GM12878 (cell line): ENCODE measurements at regions of chr11 and their contacts with region 1.

Region 1: GRCh38 chr11:128630367-128631230 is 43.2 kb upstream of the ETS1 start:
- DNase-seq: peak; percentile 89
- ATAC-seq: peak; percentile 87
- H3K4me3 ChIP-seq: peak overlapping the region; percentile 15; the same call in 1 of the 2 replicates
- H3K27ac ChIP-seq: peak overlapping the region; percentile 64
- H3K4me1 ChIP-seq: peaks cover 51% of the 10 kb centered on the region
- H3K27me3 ChIP-seq: no peaks in the 10 kb centered on the region
- CTCF ChIP-seq: peak; percentile 80 to 97 (median 82)
- EP300 ChIP-seq: no peak
- POLR2A ChIP-seq: no peak
- RAD21 ChIP-seq: peak; percentile 98

Region 2: GRCh38 chr11:128290106-128290840 is 340.3 kb before region 1 on chr11:
- CTCF ChIA-PET with region 1: interaction called, 195 read pairs
- POLR2A ChIA-PET with region 1: interaction called, 4 read pairs
- RAD21 ChIA-PET with region 1: interaction called, 144 read pairs
- SMC1A ChIA-PET with region 1: interaction called, 200 read pairs
- in situ Hi-C with region 1: loop called (anchors 5 kb)
- intact Hi-C with region 1: loop called (anchors 1 kb)
- DNase-seq: peak; percentile 80
- ATAC-seq: peak; percentile 92
- H3K4me3 ChIP-seq: peak overlapping the region; percentile 53
- H3K27ac ChIP-seq: peak overlapping the region; percentile 75
- H3K4me1 ChIP-seq: peaks cover 25% of the 10 kb centered on the region
- H3K27me3 ChIP-seq: no peaks in the 10 kb centered on the region
- CTCF ChIP-seq: peak; percentile 71 to 89 (median 85)
- EP300 ChIP-seq: peak; percentile 10 to 24; a peak in 1 of 4 replicates
- POLR2A ChIP-seq: peak; percentile 43
- RAD21 ChIP-seq: peak; percentile 99

Region 3: DNA sequence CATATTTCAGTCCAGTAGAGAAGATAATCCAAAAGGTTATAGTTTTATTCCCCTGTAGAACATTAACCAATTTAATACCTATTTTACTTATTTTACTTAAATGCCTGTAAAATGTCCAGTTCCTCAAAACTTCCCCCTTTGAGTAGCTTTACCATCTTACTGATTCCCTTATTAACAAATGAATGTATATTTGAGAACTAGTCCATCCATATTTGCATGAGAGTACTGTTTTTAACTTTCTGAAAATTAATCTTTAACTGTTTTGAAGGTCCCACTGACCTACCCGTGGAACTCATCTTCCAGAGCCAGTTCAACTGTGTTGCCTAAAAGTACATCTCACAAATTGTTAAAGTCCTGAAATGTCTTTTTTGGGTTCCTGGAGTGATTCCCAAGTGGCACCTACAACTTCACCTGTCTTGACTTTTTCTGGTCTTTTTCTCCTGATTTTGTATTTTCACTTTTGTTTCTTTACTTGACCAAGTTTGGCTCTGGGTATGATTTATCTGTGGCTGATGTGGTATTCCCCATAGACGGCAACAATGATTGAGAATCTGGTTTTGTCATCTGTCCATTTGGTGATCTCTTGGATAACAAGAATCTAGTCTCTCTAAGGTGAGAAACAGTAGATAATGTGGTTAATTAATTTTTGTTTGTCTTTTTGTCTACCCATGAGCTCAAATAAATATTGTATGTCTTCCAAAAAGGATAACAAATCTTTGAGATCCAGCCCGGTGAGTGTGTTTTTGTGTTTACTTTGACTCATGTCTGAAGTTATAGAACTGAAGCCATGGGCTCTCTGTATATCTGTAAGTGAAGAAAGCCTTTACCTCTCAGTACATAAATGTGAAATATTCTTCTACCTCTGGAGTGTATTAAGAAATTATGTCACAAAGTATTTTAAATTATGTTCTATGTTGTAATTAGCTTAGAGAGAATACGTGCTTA is 217.5 kb before region 1 on chr11:
- CTCF ChIA-PET with region 1: interaction called, 4 read pairs
- POLR2A ChIA-PET with region 1: interaction called, 3 read pairs
- RAD21 ChIA-PET with region 1: interaction called, 9 read pairs
- SMC1A ChIA-PET with region 1: interaction called, 27 read pairs
- in situ Hi-C with region 1: no loop called
- intact Hi-C with region 1: loop called (anchors 5 kb)
- DNase-seq: peak; percentile 82
- ATAC-seq: peak; percentile 76
- H3K4me3 ChIP-seq: peak overlapping the region; percentile 47; the same call in 1 of the 2 replicates
- H3K27ac ChIP-seq: peak overlapping the region; percentile 75
- H3K4me1 ChIP-seq: peaks cover 6% of the 10 kb centered on the region
- H3K27me3 ChIP-seq: no peaks in the 10 kb centered on the region
- CTCF ChIP-seq: no peak
- EP300 ChIP-seq: peak; percentile 45 to 76; a peak in 2 of 4 replicates
- POLR2A ChIP-seq: no peak
- RAD21 ChIP-seq: no peak

Region 4: DNA sequence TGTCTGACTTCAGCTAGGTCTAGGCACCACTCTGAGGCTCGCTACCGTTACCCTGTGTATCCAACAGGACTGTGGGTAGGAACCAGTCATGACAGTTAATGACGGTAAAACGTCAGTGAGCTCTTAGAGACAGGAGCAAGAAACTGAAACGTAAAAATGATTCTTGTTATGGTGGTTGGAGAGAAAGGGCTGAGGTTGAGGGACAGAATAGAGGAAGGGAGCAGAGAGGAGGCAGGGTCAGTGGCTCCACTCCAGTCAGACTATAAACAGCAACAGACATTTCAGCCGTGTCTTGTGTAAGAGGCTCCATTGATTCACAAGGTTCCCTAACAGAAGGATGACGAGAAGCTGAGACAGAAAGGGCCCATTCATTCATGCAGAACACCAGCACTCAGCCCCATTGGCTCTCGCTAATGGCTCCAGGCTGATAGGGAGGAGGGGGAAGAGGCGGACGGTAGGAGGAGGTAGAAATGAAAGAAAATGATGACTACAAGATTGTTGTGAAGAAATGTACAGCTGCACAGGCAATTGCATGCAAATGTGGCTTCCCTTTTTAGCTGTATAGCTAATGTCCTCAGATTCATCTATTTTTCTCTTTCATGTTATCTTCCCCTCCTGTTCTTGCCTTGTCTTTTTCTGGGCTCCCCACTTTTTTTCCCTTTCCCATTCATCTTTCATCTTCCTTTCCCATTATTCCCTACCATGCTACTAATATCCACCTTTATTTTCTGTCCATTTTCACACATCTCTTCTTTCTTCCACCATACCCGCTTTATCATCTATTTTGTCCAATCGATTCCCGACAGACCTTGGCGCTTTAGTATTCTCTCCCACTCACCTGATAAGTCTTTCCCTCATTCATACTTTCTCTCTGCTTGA is 77.6 kb before region 1 on chr11:
- CTCF ChIA-PET with region 1: interaction called, 118 read pairs
- POLR2A ChIA-PET with region 1: interaction called, 30 read pairs
- RAD21 ChIA-PET with region 1: interaction called, 112 read pairs
- SMC1A ChIA-PET with region 1: interaction called, 186 read pairs
- in situ Hi-C with region 1: no loop called
- intact Hi-C with region 1: loop called (anchors 1 kb)
- DNase-seq: peak; percentile 95
- ATAC-seq: peak; percentile 79
- H3K4me3 ChIP-seq: peak overlapping the region; percentile 69
- H3K27ac ChIP-seq: peak overlapping the region; percentile 100
- H3K4me1 ChIP-seq: peaks cover 50% of the 10 kb centered on the region
- H3K27me3 ChIP-seq: no peaks in the 10 kb centered on the region
- CTCF ChIP-seq: no peak
- EP300 ChIP-seq: peak in 1 of 2 experiments; percentile 35; a peak in 2 of 4 replicates
- POLR2A ChIP-seq: peak; percentile 82
- RAD21 ChIP-seq: 0 out of 2 replicates have a peak, but pooled peaks have one; percentile 2

Region 5: DNA sequence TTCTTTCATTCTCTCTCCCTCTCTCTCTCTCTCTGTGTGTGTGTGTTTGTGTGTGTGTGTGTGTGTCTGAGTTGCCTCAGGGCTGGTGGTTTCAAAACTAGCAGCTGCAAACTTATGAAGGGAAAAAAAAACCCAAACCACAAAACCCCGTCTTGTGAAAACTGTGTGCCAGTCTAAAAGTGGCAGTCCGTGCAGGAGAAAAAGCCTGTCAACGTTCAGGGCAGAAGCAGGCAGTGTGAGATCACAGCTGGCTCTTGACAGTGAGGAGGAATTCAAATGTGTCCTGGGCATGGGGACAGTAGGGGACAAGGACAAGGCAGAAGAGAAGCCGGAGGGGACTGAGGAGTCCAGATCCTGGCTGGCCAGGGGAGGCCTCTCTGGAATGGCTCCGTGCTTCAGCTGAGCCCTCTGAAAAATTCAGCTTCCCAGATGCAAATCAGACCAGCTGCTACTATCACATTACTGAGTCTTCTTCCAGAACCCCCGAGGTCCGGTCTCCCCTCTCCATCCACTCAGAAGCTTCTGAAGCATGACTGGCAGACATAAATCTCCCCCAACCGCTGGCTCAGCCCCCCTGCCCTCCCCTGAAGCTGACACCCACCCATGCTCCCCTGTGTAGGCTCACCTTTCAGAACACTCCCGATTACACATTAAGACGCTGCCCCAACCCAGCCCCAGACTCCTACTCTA is 95.2 kb after region 1 on chr11:
- CTCF ChIA-PET with region 1: interaction called, 4 read pairs
- POLR2A ChIA-PET with region 1: no interaction called
- RAD21 ChIA-PET with region 1: interaction called, 5 read pairs
- SMC1A ChIA-PET with region 1: interaction called, 11 read pairs
- in situ Hi-C with region 1: no loop called
- intact Hi-C with region 1: no loop called
- DNase-seq: peak; percentile 89
- ATAC-seq: peak; percentile 74
- H3K4me3 ChIP-seq: peak overlapping the region; percentile 53; the same call in 1 of the 2 replicates
- H3K27ac ChIP-seq: peak overlapping the region; percentile 79
- H3K4me1 ChIP-seq: peaks cover 90% of the 10 kb centered on the region
- H3K27me3 ChIP-seq: no peaks in the 10 kb centered on the region
- CTCF ChIP-seq: no peak
- EP300 ChIP-seq: peak; percentile 43 to 85; a peak in 3 of 4 replicates
- POLR2A ChIP-seq: no peak
- RAD21 ChIP-seq: no peak

Region 6: GRCh38 chr11:128831174-128832120 is 200.8 kb after region 1 on chr11:
- CTCF ChIA-PET with region 1: interaction called, 177 read pairs
- POLR2A ChIA-PET with region 1: interaction called, 3 read pairs
- RAD21 ChIA-PET with region 1: interaction called, 125 read pairs
- SMC1A ChIA-PET with region 1: interaction called, 146 read pairs
- in situ Hi-C with region 1: loop called (anchors 25 kb)
- intact Hi-C with region 1: loop called (anchors 1 kb)
- DNase-seq: peak; percentile 69
- ATAC-seq: peak; percentile 92
- H3K4me3 ChIP-seq: peak overlapping the region; percentile 28; the same call in 1 of the 2 replicates
- H3K27ac ChIP-seq: peak overlapping the region; percentile 60
- H3K4me1 ChIP-seq: peaks cover 27% of the 10 kb centered on the region
- H3K27me3 ChIP-seq: no peaks in the 10 kb centered on the region
- CTCF ChIP-seq: peak; percentile 80 to 91 (median 85); a peak in 5 of 6 replicates
- EP300 ChIP-seq: no peak
- POLR2A ChIP-seq: no peak
- RAD21 ChIP-seq: peak; percentile 93